ENCODE measurements at regions of chr5 and their contacts with region 1.

Region 1: GRCh38 chr5:59660737-59661136 is 232.8 kb downstream of the PDE4D start:
- DNase-seq: no peak
- ATAC-seq: peak; percentile 77
- H3K4me3 ChIP-seq: no peak overlapping the region
- H3K27ac ChIP-seq: no peak overlapping the region
- H3K4me1 ChIP-seq: no peaks in the 10 kb centered on the region
- H3K27me3 ChIP-seq: no peaks in the 10 kb centered on the region
- CTCF ChIP-seq: peak; percentile 25 to 57 (median 42); a peak in 3 of 6 replicates
- EP300 ChIP-seq: no peak
- POLR2A ChIP-seq: no peak
- RAD21 ChIP-seq: peak; percentile 70

Region 2: DNA sequence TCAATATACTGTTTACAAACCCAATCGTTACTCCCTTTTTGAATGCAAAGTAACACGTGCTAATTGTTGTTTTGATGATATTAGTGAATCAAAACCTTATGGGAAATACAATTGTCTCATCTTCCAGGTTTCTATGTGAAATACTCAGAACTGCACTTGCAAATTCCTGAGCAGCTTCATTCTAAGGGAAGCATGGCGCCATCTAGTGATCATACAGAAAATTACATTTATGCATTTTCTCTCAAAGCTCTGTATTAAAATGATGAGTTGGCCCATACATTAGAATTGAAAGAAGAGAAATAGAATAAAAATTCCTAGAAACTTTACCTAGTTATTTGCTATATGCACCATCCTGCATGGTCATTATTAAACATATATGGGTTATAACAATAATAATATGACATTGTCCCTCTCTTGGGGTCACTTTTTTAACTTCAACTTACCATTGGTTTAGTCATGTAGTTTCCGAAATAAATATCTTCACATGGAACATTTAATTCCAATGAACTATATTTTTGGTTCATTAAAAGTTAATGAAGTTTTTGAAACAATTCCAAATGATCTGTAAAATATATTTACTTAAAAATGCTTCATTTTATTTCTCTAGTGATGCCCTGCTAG is 12.8 kb after region 1 on chr5:
- CTCF ChIA-PET with region 1: interaction called, 32 read pairs
- POLR2A ChIA-PET with region 1: no interaction called
- RAD21 ChIA-PET with region 1: interaction called, 4 read pairs
- SMC1A ChIA-PET with region 1: interaction called, 18 read pairs
- in situ Hi-C with region 1: no loop called
- intact Hi-C with region 1: no loop called
- DNase-seq: no peak
- ATAC-seq: peak; percentile 60
- H3K4me3 ChIP-seq: no peak overlapping the region
- H3K27ac ChIP-seq: no peak overlapping the region
- H3K4me1 ChIP-seq: no peaks in the 10 kb centered on the region
- H3K27me3 ChIP-seq: no peaks in the 10 kb centered on the region
- CTCF ChIP-seq: peak; percentile 54 to 76 (median 65); a peak in 5 of 6 replicates
- EP300 ChIP-seq: no peak
- POLR2A ChIP-seq: no peak
- RAD21 ChIP-seq: peak; percentile 90

Measured in GM12878 (cell line).